Activated CD4-positive, alpha-beta T cell treated with anti-CD3 and anti-CD28 coated beads for 36 hours (primary cell): ENCODE measurements at regions of chr7 and their contacts with region 1.

Region 1: GRCh38 chr7:97104719-97105238 is 12.7 kb upstream of the SDHAF3 start:
- DNase-seq: peak; percentile 85
- ATAC-seq: peak; percentile 85
- H3K4me3 Mint-ChIP-seq: no peak overlapping the region
- H3K27ac Mint-ChIP-seq: no peak overlapping the region
- H3K4me1 Mint-ChIP-seq: no peaks in the 10 kb centered on the region
- H3K27me3 Mint-ChIP-seq: peaks cover 16% of the 10 kb centered on the region

Region 2: GRCh38 chr7:97224316-97224715 is 119.5 kb after region 1 on chr7:
- CTCF ChIA-PET with region 1: no interaction called
- POLR2A ChIA-PET with region 1: no interaction called
- intact Hi-C with region 1: no loop called
- DNase-seq: no peak
- ATAC-seq: no peak
- H3K4me3 Mint-ChIP-seq: no peak overlapping the region
- H3K27ac Mint-ChIP-seq: no peak overlapping the region
- H3K4me1 Mint-ChIP-seq: no peaks in the 10 kb centered on the region
- H3K27me3 Mint-ChIP-seq: peaks cover 15% of the 10 kb centered on the region

Region 3: DNA sequence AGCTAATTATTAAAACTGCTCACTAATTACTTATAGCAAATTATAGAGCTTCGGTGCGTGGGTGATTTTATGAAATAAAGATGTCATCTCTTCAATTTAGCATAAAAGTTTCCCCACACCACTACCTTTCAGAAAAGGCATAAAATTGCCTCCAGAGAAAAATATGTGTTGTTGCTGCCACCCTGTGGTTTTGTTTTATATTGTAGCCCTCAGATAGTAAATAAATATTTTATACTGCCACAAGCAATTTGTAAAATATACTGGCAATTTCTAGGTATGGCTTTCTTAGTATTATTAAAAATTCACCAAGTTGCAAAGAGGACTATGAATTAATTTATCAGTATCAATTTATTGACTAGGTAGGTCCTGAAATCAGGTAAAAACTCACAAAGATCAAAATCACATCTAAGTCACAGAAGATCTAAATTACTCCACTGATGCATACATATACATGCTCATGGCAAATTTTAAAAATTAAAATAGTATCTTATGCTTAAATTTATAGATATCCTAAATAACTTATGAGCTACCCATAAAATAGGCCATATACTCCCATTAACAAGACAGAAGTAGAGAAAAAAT is 740.9 kb after region 1 on chr7:
- CTCF ChIA-PET with region 1: interaction called, 4 read pairs
- POLR2A ChIA-PET with region 1: no interaction called
- intact Hi-C with region 1: loop called in 1 of 2 experiments (anchors 2 kb)
- DNase-seq: peak; percentile 20
- ATAC-seq: no peak
- H3K4me3 Mint-ChIP-seq: no peak overlapping the region
- H3K27ac Mint-ChIP-seq: no peak overlapping the region
- H3K4me1 Mint-ChIP-seq: no peaks in the 10 kb centered on the region
- H3K27me3 Mint-ChIP-seq: peaks cover 5% of the 10 kb centered on the region